Activated CD8-positive, alpha-beta T cell treated with anti-CD3 and anti-CD28 coated beads for 36 hours (primary cell): ENCODE measurements at regions of chr17 and their contacts with region 1.

Region 1: GRCh38 chr17:76014184-76014924 is 12.8 kb downstream of the EVPL start:
- DNase-seq: peak; percentile 88
- ATAC-seq: peak; percentile 100
- H3K4me3 Mint-ChIP-seq: no peak overlapping the region
- H3K27ac Mint-ChIP-seq: peak overlapping the region; percentile 55
- H3K4me1 Mint-ChIP-seq: peaks cover 8% of the 10 kb centered on the region
- H3K27me3 Mint-ChIP-seq: no peaks in the 10 kb centered on the region
- CTCF ChIP-seq: peak; percentile 95

Region 2: GRCh38 chr17:75904749-75905521 is 109.4 kb before region 1 on chr17 and contains the start of gene MRPL38:
- CTCF ChIA-PET with region 1: interaction called, 165 read pairs
- POLR2A ChIA-PET with region 1: interaction called, 3 read pairs
- intact Hi-C with region 1: no loop called
- DNase-seq: peak; percentile 96
- ATAC-seq: peak; percentile 98
- H3K4me3 Mint-ChIP-seq: peak within 1 kb of the TSS; percentile 87
- H3K27ac Mint-ChIP-seq: peak within 1 kb of the TSS; percentile 92
- H3K4me1 Mint-ChIP-seq: peaks cover 15% of the 10 kb centered on the region
- H3K27me3 Mint-ChIP-seq: no peaks in the 10 kb centered on the region
- CTCF ChIP-seq: peak; percentile 99
- total RNA-seq, gene MRPL38: 117 to 126 TPM

Region 3: GRCh38 chr17:76027159-76027839 is 12.9 kb after region 1 on chr17 and contains the start of gene EVPL:
- CTCF ChIA-PET with region 1: interaction called, 18 read pairs
- POLR2A ChIA-PET with region 1: interaction called, 4 read pairs
- intact Hi-C with region 1: no loop called
- DNase-seq: no peak
- ATAC-seq: no peak
- H3K4me3 Mint-ChIP-seq: no peak within 1 kb of the TSS
- H3K27ac Mint-ChIP-seq: no peak within 1 kb of the TSS
- H3K4me1 Mint-ChIP-seq: peaks cover 21% of the 10 kb centered on the region
- H3K27me3 Mint-ChIP-seq: no peaks in the 10 kb centered on the region
- CTCF ChIP-seq: no peak
- total RNA-seq, gene EVPL: 0.16 to 0.34 TPM

Region 4: DNA sequence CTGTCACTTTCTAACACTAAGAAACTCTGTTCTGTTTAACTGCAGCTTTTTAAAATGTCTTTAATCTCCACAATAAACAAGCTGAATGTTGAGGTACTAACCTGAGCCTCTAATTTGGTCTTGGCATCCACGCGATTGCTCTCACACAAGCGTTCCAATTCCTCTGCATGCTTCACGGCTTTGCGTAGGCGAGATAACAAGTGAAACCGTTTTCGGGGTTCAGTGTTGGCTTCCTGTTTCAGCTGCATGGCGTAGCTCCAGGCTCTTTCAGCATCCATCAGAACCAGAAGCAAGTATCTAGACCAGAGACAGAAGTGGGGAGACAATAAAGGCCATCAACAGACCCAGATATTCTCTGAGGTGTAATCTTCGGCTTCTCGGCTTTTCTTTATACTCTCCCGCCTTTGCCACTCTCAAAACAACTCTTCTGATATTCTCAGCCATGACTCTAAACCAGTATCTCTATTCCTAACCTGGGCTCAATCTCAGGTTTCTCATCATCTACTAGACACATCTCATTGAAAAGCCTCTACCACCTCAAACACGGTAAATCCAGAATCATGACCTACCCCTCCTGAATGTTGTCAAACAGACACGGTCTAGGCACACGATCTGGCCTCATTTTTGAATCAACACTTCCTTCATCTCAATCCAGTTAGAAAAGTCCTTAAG is 49.7 kb after region 1 on chr17:
- CTCF ChIA-PET with region 1: interaction called, 14 read pairs
- POLR2A ChIA-PET with region 1: interaction called, 4 read pairs
- intact Hi-C with region 1: no loop called
- DNase-seq: peak; percentile 61
- ATAC-seq: peak; percentile 75
- H3K4me3 Mint-ChIP-seq: peak overlapping the region; percentile 9
- H3K27ac Mint-ChIP-seq: peak overlapping the region; percentile 51
- H3K4me1 Mint-ChIP-seq: peaks cover 23% of the 10 kb centered on the region
- H3K27me3 Mint-ChIP-seq: no peaks in the 10 kb centered on the region
- CTCF ChIP-seq: no peak

Region 5: GRCh38 chr17:76079956-76080767 is 65.8 kb after region 1 on chr17:
- CTCF ChIA-PET with region 1: interaction called, 12 read pairs
- POLR2A ChIA-PET with region 1: interaction called, 3 read pairs
- intact Hi-C with region 1: no loop called
- DNase-seq: peak; percentile 27
- ATAC-seq: peak; percentile 17
- H3K4me3 Mint-ChIP-seq: no peak overlapping the region
- H3K27ac Mint-ChIP-seq: no peak overlapping the region
- H3K4me1 Mint-ChIP-seq: peaks cover 37% of the 10 kb centered on the region
- H3K27me3 Mint-ChIP-seq: peaks cover 37% of the 10 kb centered on the region
- CTCF ChIP-seq: no peak

Region 6: DNA sequence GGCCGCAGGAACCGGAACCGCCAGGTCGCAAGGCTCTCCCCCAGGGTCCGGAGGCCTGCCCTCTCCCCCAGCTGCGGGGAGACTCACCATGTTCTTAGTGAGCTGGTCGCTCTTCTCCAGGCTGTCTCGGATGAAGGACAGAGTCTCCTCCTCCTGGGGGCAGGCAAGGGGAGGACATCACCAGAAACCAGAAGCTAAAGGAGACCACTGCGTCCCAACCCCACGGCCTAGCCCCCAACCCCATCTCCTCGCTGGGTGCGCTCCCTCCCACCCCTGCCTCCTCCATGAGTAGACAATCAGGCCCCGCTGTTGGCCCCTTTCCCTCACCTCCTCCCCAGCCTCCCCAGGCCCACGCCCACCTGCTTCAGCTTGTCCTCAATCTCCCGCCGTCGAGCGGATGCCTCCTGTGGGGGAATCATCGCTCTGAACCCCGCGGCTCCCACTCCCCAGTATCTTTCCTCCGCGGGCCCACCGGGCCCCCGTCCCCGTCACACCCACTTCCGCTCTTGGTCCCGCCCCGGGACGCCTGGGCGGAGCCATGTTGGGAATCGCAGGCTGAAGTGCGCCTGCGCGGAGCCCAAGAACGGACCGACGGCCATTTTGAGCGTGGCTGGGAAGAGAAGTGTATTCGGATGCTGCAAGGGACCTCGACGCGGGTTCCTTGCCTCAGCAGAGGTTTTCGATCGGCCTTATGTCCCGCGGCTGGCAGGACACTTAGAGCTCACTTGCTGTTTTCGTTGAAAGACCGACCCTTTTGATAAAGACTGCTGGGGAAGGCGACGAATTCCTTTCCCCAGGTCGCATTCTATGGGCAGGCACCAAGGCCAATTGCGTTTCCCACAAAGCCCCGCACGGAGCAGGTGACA is 89.2 kb after region 1 on chr17 and contains the start of gene EXOC7:
- CTCF ChIA-PET with region 1: interaction called, 27 read pairs
- POLR2A ChIA-PET with region 1: no interaction called
- intact Hi-C with region 1: loop called (anchors 5 kb)
- DNase-seq: peak; percentile 94
- ATAC-seq: peak; percentile 95
- H3K4me3 Mint-ChIP-seq: peak within 1 kb of the TSS; percentile 93
- H3K27ac Mint-ChIP-seq: peak within 1 kb of the TSS; percentile 97
- H3K4me1 Mint-ChIP-seq: peaks cover 25% of the 10 kb centered on the region
- H3K27me3 Mint-ChIP-seq: no peaks in the 10 kb centered on the region
- CTCF ChIP-seq: no peak
- total RNA-seq, gene EXOC7: 53.5 to 64.9 TPM

Region 7: DNA sequence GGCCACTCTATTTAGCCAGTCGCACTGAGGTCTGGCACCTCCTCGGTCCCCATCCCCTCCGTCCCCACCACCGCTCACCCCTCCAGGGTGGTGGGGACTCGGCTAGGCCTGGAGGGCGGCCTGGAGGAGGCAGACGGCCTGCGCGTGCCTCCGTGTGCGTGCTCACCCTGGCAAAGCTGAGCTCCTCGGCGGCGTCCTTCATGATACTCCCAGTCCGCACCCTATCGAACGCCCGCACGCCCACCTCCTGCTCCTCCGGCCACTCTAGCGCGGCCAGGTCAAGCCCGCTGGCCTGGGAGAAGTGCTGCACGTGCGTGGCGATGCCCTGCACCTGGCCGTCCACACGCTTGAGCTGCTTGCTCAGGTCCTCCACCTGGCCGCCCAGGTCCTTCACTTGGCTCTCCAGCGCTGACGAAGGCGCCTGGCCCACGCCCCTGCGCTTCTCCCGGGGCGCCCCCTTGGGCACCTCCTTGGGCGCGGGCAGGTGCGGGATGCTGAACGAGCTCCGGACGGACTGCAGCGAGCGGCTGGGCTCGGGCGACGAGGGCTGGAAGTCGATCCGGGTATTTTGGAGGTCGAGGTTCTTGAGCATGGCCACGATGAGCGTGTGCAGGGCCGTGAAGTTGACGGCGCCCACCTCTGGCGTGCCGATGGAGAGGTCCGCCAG is 293.1 kb after region 1 on chr17:
- CTCF ChIA-PET with region 1: interaction called, 20 read pairs
- POLR2A ChIA-PET with region 1: no interaction called
- intact Hi-C with region 1: no loop called
- DNase-seq: no peak
- ATAC-seq: no peak
- H3K4me3 Mint-ChIP-seq: no peak overlapping the region
- H3K27ac Mint-ChIP-seq: no peak overlapping the region
- H3K4me1 Mint-ChIP-seq: peaks cover 1% of the 10 kb centered on the region
- H3K27me3 Mint-ChIP-seq: no peaks in the 10 kb centered on the region
- CTCF ChIP-seq: no peak